Lower leg skin (tissue), 4 donors: ENCODE measurements at regions of chr5 and their contacts with region 1.

Region 1: DNA sequence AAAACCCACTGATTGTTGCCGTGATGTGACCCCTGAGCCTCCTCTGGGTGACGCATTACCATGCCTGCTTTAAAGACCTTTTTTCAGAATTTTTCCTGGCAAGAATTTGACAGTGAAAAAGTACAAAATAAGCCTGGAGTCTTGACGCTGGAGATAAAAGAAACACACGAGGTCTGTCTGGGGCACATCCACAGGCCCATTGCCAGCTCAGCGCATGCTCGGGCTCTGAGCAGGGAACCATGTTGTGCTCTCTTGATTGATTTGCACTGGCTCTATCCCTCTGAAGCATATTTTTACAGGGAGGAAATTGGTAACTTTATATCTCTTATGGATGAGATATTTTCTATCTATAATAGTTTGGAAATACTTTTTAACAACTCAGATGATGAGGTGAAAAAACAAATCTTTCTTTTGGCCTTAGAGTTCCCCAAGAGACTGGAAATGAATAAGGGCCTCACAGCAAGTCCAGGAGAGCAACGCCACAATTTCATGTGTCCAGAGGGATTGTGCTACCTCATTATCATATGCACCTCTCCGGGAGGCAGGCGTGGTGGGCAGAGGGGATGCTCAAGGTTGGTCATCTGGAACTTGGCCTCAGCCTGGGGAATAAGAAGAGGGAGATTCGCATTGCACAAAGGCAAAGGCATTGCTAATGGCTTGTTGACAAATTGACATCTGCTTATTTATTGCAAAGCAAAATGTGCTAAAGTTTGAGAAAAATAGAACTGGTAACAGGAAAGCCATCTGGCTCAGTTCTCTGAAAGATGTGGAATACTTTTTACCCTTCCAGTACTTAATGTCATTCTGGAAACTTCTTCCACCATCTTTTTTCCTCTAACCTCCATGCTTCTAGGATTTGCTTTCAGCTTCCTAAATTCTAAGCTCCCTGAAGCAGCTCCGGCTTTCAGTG is 183.8 kb downstream of the PJA2 start:
- DNase-seq: no peak
- H3K4me3 ChIP-seq: no peak overlapping the region
- CTCF ChIP-seq: no peak
- POLR2A ChIP-seq: no peak

Region 2: DNA sequence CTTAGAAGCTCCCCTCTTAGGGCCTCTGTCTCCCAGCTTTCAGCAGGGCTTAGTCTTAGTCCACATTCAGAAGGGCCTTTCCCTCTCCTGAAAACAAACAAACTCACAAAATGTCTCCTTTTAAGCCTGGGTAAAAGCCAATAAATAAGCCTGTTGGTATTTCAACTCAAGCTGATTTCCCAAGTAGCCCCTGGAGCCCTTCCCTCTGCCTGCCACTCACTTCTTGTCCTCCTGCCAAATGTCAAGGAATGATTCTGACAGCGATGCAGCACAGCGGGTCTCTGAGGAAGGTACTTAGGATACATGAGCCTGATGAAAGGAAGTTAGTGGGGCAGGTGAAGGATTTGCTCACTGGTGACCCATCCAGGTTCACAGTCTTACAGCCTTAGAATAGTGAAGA is 26.7 kb before region 1 on chr5:
- intact Hi-C with region 1: no loop called
- DNase-seq: no peak
- H3K4me3 ChIP-seq: no peak overlapping the region
- CTCF ChIP-seq: no peak
- POLR2A ChIP-seq: no peak

Region 3: GRCh38 chr5:109291090-109291489 is 65.1 kb after region 1 on chr5:
- intact Hi-C with region 1: loop called (anchors 2 kb)
- DNase-seq: no peak
- H3K4me3 ChIP-seq: no peak overlapping the region
- CTCF ChIP-seq: no peak
- POLR2A ChIP-seq: no peak